ENCODE measurements at regions of chr3 and their contacts with region 1.

Region 1: GRCh38 chr3:112293368-112294321 is at the start of gene SLC9C1:
- DNase-seq: peak; percentile 18
- ATAC-seq: peak; percentile 75
- H3K4me3 Mint-ChIP-seq: peak within 1 kb of the TSS; percentile 83
- H3K27ac Mint-ChIP-seq: peak within 1 kb of the TSS; percentile 88
- H3K4me1 Mint-ChIP-seq: peaks cover 37% of the 10 kb centered on the region
- H3K27me3 Mint-ChIP-seq: no peaks in the 10 kb centered on the region
- CTCF ChIP-seq: no peak
- total RNA-seq, gene SLC9C1: 0.24 and 0.58 TPM in 2 replicates

Region 2: GRCh38 chr3:112097378-112097777 is 196.3 kb before region 1 on chr3:
- CTCF ChIA-PET with region 1: no interaction called
- POLR2A ChIA-PET with region 1: no interaction called
- intact Hi-C with region 1: no loop called
- DNase-seq: no peak
- ATAC-seq: peak; percentile 93
- H3K4me3 Mint-ChIP-seq: no peak overlapping the region
- H3K27ac Mint-ChIP-seq: no peak overlapping the region
- H3K4me1 Mint-ChIP-seq: peaks cover 23% of the 10 kb centered on the region
- H3K27me3 Mint-ChIP-seq: no peaks in the 10 kb centered on the region
- CTCF ChIP-seq: no peak

Region 3: DNA sequence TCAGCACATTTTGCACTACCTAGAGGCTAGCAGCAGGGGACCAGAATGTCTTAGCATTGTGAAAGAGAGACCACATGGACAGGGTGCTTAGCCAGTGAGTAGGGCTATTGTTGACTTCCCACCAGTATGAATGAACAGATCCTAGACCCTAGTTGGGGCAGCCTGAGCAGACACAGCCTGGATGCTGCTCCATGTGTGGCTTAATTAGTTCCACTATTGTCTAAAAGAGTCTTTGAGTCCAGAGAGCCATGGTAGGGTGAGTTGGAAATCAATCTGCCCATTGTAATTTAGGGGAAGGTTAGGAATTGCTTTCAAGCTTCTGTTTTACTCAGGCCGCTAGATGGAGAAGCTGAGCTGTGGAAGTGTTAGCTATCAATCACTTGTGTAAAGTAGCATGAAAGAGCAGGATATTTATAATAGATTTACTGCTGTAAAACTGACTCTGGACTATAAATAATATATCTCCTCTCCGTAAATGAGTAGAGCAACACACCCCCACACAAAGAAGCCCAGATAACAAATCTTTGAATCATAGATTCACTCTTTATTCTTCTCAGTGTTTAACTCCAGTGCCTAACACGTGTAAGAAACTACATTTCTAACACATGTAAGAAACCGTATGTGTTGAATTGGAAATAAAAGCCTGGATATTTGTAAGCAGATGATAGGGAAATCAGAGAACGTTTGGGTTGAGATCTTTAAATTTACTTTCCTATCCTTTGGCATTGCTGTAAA is 156.5 kb before region 1 on chr3:
- CTCF ChIA-PET with region 1: interaction called, 26 read pairs
- POLR2A ChIA-PET with region 1: interaction called, 4 read pairs
- intact Hi-C with region 1: loop called (anchors 1 kb)
- DNase-seq: no peak
- ATAC-seq: no peak
- H3K4me3 Mint-ChIP-seq: peak overlapping the region; percentile 42
- H3K27ac Mint-ChIP-seq: peak overlapping the region; percentile 80
- H3K4me1 Mint-ChIP-seq: peaks cover 63% of the 10 kb centered on the region
- H3K27me3 Mint-ChIP-seq: no peaks in the 10 kb centered on the region
- CTCF ChIP-seq: no peak

Region 4: DNA sequence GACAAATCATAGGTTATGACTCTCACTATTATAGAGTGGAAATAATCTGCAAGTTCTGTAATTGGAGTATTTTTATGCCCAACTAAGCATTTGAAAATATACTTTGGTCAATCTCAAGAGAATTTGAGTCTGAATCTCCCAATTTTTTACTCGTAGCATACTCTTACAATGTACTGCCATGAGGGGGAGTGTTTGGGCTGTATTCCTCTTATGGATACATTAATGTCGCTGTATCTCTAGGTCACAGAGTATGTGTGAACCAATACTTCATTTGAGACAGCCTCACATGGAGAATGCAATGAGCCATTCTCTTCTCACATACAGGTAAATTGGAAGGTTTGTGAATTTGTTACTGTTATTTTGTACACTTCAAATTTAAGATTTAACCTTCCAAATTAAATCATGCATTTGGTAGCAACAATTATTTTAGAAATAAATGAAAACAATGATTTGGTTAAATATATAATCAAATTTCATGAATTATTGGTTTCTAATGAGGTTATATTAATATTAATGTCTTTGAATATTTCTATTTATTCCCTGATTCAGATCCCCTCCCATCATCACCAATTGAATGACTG is 33.8 kb after region 1 on chr3:
- CTCF ChIA-PET with region 1: interaction called, 25 read pairs
- POLR2A ChIA-PET with region 1: interaction called, 4 read pairs
- intact Hi-C with region 1: loop called (anchors 1 kb)
- DNase-seq: no peak
- ATAC-seq: peak; percentile 100
- H3K4me3 Mint-ChIP-seq: no peak overlapping the region
- H3K27ac Mint-ChIP-seq: no peak overlapping the region
- H3K4me1 Mint-ChIP-seq: peaks cover 17% of the 10 kb centered on the region
- H3K27me3 Mint-ChIP-seq: no peaks in the 10 kb centered on the region
- CTCF ChIP-seq: no peak

Region 5: DNA sequence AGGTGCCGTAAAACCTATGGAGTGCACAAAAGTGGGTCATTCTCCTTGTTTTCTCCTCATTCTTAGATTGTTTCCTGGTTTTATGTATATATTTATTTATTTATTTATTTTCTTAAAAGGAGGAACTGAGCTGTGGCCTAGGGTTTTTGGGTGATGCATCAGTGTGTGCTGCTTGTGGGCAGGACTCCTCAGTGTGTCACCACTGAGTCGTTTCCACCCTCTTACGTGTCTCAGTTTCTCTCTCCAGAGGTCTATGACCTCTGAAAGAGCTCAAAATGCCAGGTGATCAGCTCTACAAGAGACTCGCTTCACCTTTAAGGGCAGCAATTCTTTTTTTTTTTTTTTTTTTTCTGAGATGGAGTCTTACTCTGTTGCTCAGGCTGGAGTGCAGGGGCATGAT is 112.2 kb after region 1 on chr3:
- CTCF ChIA-PET with region 1: no interaction called
- POLR2A ChIA-PET with region 1: no interaction called
- intact Hi-C with region 1: no loop called
- DNase-seq: no peak
- ATAC-seq: no peak
- H3K4me3 Mint-ChIP-seq: no peak overlapping the region
- H3K27ac Mint-ChIP-seq: peak overlapping the region; percentile 68
- H3K4me1 Mint-ChIP-seq: peaks cover 31% of the 10 kb centered on the region
- H3K27me3 Mint-ChIP-seq: no peaks in the 10 kb centered on the region
- CTCF ChIP-seq: no peak

Region 6: GRCh38 chr3:112437146-112438022 is 143.7 kb after region 1 on chr3:
- CTCF ChIA-PET with region 1: interaction called, 13 read pairs
- POLR2A ChIA-PET with region 1: no interaction called
- intact Hi-C with region 1: no loop called
- DNase-seq: no peak
- ATAC-seq: peak; percentile 84
- H3K4me3 Mint-ChIP-seq: no peak overlapping the region
- H3K27ac Mint-ChIP-seq: no peak overlapping the region
- H3K4me1 Mint-ChIP-seq: peaks cover 58% of the 10 kb centered on the region
- H3K27me3 Mint-ChIP-seq: no peaks in the 10 kb centered on the region
- CTCF ChIP-seq: no peak

Region 7: DNA sequence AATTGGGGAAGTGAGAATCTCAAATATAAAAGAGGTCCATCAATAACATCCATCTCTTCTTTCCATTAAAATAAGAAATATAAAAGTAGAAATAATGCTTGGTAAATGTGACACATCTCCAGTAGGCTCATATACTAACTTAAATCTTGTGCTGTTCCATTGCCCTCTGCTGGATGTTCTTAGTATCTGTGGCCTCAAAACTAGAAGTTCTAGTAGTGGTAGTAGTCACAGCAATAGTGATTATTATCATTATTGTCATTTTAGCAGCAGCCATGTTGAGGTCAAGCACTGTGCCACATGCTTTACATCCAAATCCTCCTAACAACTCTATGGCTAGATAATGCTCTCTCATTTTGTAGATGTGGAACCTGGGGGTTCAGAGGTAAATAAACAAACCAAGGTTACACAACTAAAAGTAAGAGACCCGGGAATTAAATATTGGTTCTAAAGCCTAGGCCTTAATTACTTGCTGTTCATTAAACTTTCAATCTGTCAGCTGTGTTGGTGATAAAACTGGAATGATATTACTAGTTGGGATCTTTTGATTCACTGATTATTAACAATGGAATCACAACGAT is 225.9 kb after region 1 on chr3:
- CTCF ChIA-PET with region 1: interaction called, 22 read pairs
- POLR2A ChIA-PET with region 1: no interaction called
- intact Hi-C with region 1: loop called (anchors 1 kb)
- DNase-seq: no peak
- ATAC-seq: peak; percentile 75
- H3K4me3 Mint-ChIP-seq: peak overlapping the region; percentile 58
- H3K27ac Mint-ChIP-seq: peak overlapping the region; percentile 89
- H3K4me1 Mint-ChIP-seq: peaks cover 41% of the 10 kb centered on the region
- H3K27me3 Mint-ChIP-seq: no peaks in the 10 kb centered on the region
- CTCF ChIP-seq: no peak

Region 8: GRCh38 chr3:112990672-112991602 is 697.3 kb after region 1 on chr3 and contains the start of gene GTPBP8:
- CTCF ChIA-PET with region 1: no interaction called
- POLR2A ChIA-PET with region 1: no interaction called
- intact Hi-C with region 1: loop called (anchors 5 kb)
- DNase-seq: peak; percentile 79
- ATAC-seq: peak; percentile 86
- H3K4me3 Mint-ChIP-seq: peak within 1 kb of the TSS; percentile 92
- H3K27ac Mint-ChIP-seq: peak within 1 kb of the TSS; percentile 92
- H3K4me1 Mint-ChIP-seq: peaks cover 27% of the 10 kb centered on the region
- H3K27me3 Mint-ChIP-seq: no peaks in the 10 kb centered on the region
- CTCF ChIP-seq: no peak
- total RNA-seq, gene GTPBP8: 14.3 and 18.1 TPM in 2 replicates

Measured in activated B cell treated with CpG ODN at 0.5 μM for 24 hours (primary cell).